Left cardiac atrium (tissue), 4 donors: ENCODE measurements at regions of chr1 and their contacts with region 1.

Region 1: GRCh38 chr1:1441002-1441888 is 5.8 kb downstream of the VWA1 start:
- DNase-seq: peak; percentile 65
- ATAC-seq: peak; percentile 80 to 85

Region 2: DNA sequence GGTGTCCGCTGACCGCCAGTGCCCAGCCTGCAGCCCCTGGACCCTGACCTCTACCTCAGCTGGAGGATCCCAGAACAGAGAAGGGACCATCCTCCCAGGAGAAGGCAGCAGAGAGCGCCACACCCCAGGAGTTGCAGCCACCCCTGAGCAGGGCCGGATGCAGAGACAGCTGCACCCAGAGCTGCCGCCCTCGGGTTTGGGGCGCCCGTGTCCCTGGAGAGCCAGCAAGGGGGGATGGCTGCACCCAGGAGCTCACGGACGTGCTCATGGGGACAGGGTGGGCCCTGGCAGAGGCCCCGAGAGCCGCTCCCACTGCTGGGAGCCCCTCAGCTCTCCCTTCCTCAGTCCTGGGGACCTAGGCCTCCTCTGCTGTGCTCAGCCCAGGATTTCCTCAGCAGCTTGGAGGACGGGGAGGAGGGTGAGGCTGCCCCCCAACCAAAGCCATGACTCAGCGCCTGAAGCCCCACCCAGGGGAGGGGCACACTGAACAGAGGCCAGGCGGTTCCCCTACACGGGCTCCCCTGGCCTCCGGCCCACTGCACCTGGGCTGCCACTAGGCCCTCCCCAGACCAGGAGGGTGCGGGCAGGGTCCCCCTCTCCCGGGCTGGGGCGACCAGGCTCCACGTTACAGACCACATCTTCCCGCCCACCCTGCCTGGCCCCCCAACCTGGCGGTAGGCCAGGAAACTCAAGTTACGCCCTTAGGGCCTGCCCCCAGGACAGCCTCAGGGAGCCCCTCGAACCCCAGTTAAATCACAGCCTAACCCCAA is 135.8 kb before region 1 on chr1:
- intact Hi-C with region 1: no loop called
- DNase-seq: peak; percentile 78
- ATAC-seq: peak; percentile 4 to 49

Region 3: GRCh38 chr1:1406817-1407635 is 34.2 kb before region 1 on chr1 and contains the start of gene MRPL20:
- intact Hi-C with region 1: loop called in 1 of 2 experiments (anchors 5 kb)
- DNase-seq: peak; percentile 96
- ATAC-seq: peak; percentile 98
- total RNA-seq, gene MRPL20: 112 to 134 TPM

Region 4: GRCh38 chr1:2091611-2092604 is 650.7 kb after region 1 on chr1:
- intact Hi-C with region 1: no loop called
- DNase-seq: peak; percentile 45
- ATAC-seq: no peak